ENCODE measurements at regions of chr17 and their contacts with region 1.

Region 1: GRCh38 chr17:76681222-76682137 is 29.3 kb downstream of the MXRA7 start:
- DNase-seq: peak; percentile 89
- ATAC-seq: peak; percentile 85
- H3K4me3 Mint-ChIP-seq: no peak overlapping the region
- H3K27ac Mint-ChIP-seq: no peak overlapping the region
- H3K4me1 Mint-ChIP-seq: peaks cover 4% of the 10 kb centered on the region
- H3K27me3 Mint-ChIP-seq: no peaks in the 10 kb centered on the region
- CTCF ChIP-seq: peak; percentile 48; the same call in 1 of the 2 replicates

Region 2: GRCh38 chr17:76523084-76524037 is 158.1 kb before region 1 on chr17:
- CTCF ChIA-PET with region 1: interaction called, 42 read pairs
- POLR2A ChIA-PET with region 1: interaction called, 3 read pairs
- DNase-seq: peak; percentile 88
- ATAC-seq: peak; percentile 79
- H3K4me3 Mint-ChIP-seq: peak overlapping the region; percentile 29; the same call in 1 of the 2 replicates
- H3K27ac Mint-ChIP-seq: no peak overlapping the region
- H3K4me1 Mint-ChIP-seq: peaks cover 21% of the 10 kb centered on the region
- H3K27me3 Mint-ChIP-seq: peaks cover 24% of the 10 kb centered on the region
- CTCF ChIP-seq: peak; percentile 99

Region 3: DNA sequence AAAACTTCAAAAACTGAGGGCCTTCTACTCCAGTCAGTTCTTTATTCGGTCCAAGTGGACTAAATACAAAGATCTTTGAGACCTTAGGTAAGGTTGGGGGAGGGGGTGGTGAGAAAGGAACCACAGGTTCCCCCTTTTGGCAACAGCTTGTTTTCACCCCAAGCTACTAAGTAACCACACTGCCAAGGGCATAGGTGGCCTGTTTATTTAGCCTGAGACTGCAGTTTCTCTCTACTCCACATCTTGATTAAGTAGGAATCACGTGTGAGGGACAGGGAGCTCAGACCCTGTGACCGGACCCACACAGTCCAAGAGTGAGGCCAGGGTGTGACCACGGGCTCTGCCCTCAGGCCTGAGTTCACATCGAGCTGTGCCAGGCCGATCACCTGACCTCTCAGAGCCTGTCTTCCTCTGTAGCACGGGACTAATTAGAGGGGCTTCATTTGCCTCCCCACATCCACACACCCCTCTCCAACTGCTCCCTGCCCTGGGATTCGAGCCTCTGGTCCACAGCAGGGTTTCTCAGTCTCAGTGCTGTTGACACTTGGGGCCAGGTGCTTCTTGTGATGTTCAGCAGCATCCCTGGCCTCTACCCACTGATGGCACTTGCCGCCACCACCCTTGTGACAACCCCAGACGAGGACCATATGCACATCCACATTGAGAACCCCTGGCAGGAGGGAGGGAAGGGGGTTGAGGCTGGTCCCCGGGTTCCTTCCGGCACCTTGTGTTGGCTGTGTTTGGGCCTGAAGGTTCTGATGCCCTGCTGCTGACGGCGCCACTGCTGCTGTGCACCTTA is 113.6 kb before region 1 on chr17:
- CTCF ChIA-PET with region 1: interaction called, 33 read pairs
- POLR2A ChIA-PET with region 1: no interaction called
- DNase-seq: no peak
- ATAC-seq: peak; percentile 23
- H3K4me3 Mint-ChIP-seq: no peak overlapping the region
- H3K27ac Mint-ChIP-seq: peak overlapping the region; percentile 84
- H3K4me1 Mint-ChIP-seq: peaks cover 38% of the 10 kb centered on the region
- H3K27me3 Mint-ChIP-seq: no peaks in the 10 kb centered on the region
- CTCF ChIP-seq: no peak

Region 4: GRCh38 chr17:76623271-76624146 is 58.0 kb before region 1 on chr17:
- CTCF ChIA-PET with region 1: interaction called, 33 read pairs
- POLR2A ChIA-PET with region 1: no interaction called
- DNase-seq: peak; percentile 79
- ATAC-seq: peak; percentile 95
- H3K4me3 Mint-ChIP-seq: no peak overlapping the region
- H3K27ac Mint-ChIP-seq: no peak overlapping the region
- H3K4me1 Mint-ChIP-seq: no peaks in the 10 kb centered on the region
- H3K27me3 Mint-ChIP-seq: 0 out of 2 replicates have a peak, but pooled peaks cover 5% of the 10 kb centered on the region
- CTCF ChIP-seq: peak; percentile 89

Region 5: DNA sequence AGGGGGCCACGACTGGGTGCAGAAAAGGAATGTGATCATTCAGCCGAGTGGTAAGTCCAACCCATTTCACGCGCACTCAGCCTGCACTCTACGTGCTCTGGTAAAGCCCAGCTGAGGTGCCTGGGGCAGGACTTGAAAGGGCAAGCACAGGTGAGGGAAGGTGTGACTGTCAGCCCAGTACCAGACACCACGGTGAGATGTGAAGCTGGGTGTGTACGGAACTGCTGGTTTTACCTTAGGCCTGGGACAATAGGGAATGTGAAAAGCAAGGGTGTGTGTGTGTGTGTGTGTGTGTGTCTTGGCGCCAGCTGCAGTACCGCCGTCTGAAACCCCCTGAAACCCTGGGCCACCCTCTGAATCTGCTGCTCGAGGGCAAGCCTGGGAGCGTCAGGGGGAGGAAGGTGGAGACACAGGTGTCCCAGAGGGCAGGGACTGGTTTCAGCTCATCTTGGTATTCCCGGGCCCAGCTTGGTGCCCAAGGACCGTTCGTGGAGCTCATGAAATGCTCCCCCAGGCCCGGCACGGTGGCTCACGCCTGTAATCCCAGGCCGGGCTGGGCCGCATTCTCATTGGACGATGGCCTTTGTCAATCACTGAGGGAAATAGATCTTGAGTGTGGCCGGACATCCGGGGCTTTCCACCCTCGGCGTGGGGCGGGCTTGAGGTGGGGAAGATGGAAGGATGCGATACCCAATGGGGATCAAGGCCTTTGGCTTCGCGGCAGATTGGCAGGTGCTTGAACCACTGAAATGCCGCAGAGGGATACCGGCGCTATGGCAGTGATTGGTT is 10.2 kb before region 1 on chr17:
- CTCF ChIA-PET with region 1: interaction called, 69 read pairs
- POLR2A ChIA-PET with region 1: no interaction called
- DNase-seq: peak; percentile 100
- ATAC-seq: peak; percentile 97
- H3K4me3 Mint-ChIP-seq: peak overlapping the region; percentile 89
- H3K27ac Mint-ChIP-seq: peak overlapping the region; percentile 98
- H3K4me1 Mint-ChIP-seq: peaks cover 24% of the 10 kb centered on the region
- H3K27me3 Mint-ChIP-seq: no peaks in the 10 kb centered on the region
- CTCF ChIP-seq: no peak

Region 6: DNA sequence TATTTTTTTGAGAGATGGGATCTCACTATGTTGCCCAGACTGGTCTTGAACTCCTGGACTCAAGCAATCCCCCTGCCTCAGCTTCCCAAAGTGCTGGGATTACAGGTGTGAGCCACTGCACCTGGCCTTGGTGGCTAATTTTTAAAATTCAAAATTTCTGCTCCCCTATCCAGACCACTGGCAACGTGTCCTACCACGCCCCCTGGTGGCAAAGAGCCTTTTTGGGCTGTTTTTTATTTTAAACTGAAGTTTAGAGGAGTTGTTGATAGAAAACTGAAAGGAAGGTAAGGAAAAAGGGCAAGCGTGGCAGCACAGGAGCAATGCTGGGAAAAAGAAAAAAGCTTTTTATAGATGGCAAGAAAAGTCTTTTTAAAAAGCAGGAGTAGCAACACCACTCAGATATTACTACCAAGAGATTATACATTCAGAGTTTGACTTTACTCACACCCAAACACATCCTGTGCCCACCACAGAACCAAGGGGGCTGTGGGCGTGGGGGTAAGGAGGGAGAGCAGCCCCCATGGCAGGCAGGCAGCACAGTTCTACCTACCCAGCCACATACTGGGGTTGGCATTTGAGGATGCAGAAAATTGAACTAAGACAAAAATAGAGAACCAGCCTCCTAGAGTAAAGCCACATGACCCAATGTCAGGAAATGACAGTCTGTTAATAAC is 33.5 kb after region 1 on chr17:
- CTCF ChIA-PET with region 1: interaction called, 52 read pairs
- POLR2A ChIA-PET with region 1: no interaction called
- DNase-seq: peak; percentile 73
- ATAC-seq: no peak
- H3K4me3 Mint-ChIP-seq: no peak overlapping the region
- H3K27ac Mint-ChIP-seq: peak overlapping the region; percentile 40; the same call in 1 of the 2 replicates
- H3K4me1 Mint-ChIP-seq: peaks cover 9% of the 10 kb centered on the region
- H3K27me3 Mint-ChIP-seq: peaks cover 2% of the 10 kb centered on the region
- CTCF ChIP-seq: peak; percentile 68; the same call in 1 of the 2 replicates

Region 7: DNA sequence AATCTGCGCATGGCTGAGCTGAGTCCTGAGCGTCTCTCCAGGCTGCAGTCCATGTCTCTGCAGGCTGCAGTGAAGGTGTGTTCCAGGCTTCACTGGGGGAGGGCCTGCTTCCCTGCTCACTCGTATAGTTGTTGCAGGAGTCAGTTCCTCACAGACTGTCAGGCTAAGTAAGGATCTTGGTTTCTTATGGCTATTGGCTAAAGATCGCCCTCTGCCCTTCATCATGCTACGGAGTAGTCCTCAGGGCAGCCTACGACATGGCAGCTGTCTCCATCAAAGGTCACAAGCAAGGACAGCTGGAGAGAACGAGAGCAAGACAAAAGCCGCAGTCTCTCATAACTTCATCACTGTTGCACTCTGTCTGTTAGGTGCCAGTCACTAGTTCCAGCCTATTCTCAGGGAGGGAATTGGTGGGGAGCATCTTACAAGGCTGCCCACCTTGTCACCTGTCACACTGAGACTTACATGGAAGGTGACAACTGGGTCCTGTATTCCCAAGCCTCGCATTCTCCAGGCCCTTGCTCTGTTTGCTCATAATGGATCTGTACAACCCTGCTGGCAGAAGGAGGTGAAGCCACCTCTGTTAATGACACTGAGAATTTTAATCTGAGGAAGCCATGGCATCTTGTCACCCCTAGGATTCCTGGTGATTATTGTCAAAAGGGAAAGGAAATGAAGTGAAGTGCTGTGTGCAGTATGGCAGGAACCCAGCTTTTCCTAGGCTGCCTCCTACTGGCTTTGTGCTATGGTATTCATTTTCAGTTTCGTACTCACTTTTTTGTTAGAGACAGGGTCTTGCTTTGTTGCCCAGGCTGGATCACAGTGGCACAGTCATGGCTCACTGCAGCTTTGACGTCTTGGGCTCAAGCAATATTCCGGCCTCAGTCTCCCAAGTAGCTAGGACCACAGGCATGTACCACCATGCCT is 99.8 kb after region 1 on chr17:
- CTCF ChIA-PET with region 1: no interaction called
- POLR2A ChIA-PET with region 1: no interaction called
- DNase-seq: no peak
- ATAC-seq: peak; percentile 74
- H3K4me3 Mint-ChIP-seq: no peak overlapping the region
- H3K27ac Mint-ChIP-seq: peak overlapping the region; percentile 42; the same call in 1 of the 2 replicates
- H3K4me1 Mint-ChIP-seq: no peaks in the 10 kb centered on the region
- H3K27me3 Mint-ChIP-seq: no peaks in the 10 kb centered on the region
- CTCF ChIP-seq: no peak

Region 8: GRCh38 chr17:76843703-76844484 is 162.4 kb after region 1 on chr17:
- CTCF ChIA-PET with region 1: no interaction called
- POLR2A ChIA-PET with region 1: no interaction called
- DNase-seq: no peak
- ATAC-seq: no peak
- H3K4me3 Mint-ChIP-seq: no peak overlapping the region
- H3K27ac Mint-ChIP-seq: no peak overlapping the region
- H3K4me1 Mint-ChIP-seq: peaks cover 49% of the 10 kb centered on the region
- H3K27me3 Mint-ChIP-seq: peaks cover 26% of the 10 kb centered on the region
- CTCF ChIP-seq: no peak

Measured in WTC11 (cell line).